Common myeloid progenitor, CD34-positive (primary cell): ENCODE measurements at regions of chr3 and their contacts with region 1.

Region 1: DNA sequence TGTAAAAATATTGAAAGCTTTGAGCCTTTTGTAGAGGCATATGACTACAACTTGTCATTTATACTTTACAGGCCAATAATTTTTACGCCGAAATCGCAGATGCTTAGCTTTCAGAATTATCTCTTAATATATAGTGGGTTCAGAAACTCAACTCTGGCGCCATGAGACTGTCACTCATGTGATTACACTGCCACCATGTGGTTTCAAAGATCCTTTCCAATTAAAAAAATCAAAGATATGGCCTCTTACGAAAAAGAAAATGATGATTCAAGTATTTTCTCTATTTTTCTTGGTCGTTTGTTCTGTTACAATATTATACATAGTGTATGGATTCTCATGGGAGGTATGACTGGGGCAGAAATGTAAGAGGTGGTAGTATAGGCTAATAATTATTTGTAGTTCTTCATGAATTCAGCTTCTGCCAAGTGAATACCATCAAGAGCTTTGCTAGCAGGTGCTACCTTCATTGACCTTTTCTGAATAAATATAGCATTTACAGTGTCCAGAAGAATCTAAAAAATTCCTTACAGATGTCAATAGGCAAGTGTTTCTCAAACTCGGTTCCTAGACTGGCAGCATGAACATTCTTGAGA is 751.7 kb upstream of the GOLIM4 start:
- DNase-seq: peak; percentile 55 to 76 (median 71)
- H3K4me3 ChIP-seq: peak overlapping the region in 4 of 7 experiments; percentile 13 to 70 (median 40)
- H3K27ac ChIP-seq: no peak overlapping the region
- H3K4me1 ChIP-seq: peaks cover 0 to 3% (median 1%) of the 10 kb centered on the region in 4 experiments
- H3K27me3 ChIP-seq: no peaks in the 10 kb centered on the region

Region 2: DNA sequence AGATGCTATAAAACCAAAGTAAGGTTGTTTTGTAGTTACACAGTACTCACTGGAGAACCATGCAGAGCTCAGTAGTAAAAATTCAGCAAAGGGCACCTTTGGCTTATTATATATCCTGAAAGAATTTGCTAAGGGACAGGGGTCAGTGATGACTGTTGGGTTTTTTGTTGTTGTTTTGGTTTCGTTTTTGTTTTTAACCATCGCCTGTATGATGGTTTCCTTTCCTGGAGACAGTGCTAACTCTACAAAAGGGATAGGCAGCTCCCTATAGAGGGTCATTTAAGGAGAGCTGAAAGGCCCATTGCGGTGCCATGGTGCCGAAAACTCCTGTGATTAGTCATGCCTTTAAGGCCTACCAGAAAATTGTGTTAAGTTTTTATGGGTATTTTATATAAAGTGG is 633.5 kb before region 1 on chr3:
- CTCF ChIA-PET with region 1: interaction called, 54 read pairs
- POLR2A ChIA-PET with region 1: no interaction called
- DNase-seq: peak; percentile 25 to 64 (median 56)
- H3K4me3 ChIP-seq: peak overlapping the region in 2 of 7 experiments; percentile 61 to 66
- H3K27ac ChIP-seq: no peak overlapping the region
- H3K4me1 ChIP-seq: peaks cover 0 to 13% (median 0%) of the 10 kb centered on the region in 4 experiments
- H3K27me3 ChIP-seq: no peaks in the 10 kb centered on the region

Region 3: DNA sequence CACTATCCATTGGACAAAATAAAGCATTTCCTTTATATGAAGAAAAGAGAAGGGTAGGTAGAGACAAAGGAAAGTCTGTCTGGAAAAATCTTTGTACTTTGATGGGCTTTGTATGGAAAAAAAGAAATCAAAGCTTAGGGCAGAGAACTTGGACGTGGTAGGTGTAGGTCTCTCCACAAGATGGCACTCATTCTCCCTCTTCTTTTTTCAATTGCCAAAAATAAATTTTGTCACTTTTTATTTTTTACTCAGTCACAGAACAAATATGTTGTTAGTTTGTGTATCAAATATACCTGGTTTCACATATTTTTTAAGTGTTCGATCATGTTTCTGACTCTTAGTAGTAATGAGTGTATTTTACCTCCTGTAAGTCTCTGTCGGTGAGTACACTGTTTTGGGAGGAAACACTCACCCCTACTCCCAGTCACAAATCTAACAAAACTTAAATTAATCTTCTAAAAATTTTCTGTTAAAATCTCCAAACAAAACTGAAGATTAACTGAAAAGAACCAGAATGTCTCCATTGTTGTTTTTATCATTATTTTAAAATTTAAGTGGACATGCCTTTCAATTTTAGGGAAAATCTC is 335.9 kb before region 1 on chr3:
- CTCF ChIA-PET with region 1: interaction called, 14 read pairs
- POLR2A ChIA-PET with region 1: no interaction called
- DNase-seq: peak; percentile 44 to 62 (median 58)
- H3K4me3 ChIP-seq: peak overlapping the region in 1 of 7 experiments; percentile 12
- H3K27ac ChIP-seq: no peak overlapping the region
- H3K4me1 ChIP-seq: peaks cover 0 to 11% (median 2%) of the 10 kb centered on the region in 4 experiments
- H3K27me3 ChIP-seq: no peaks in the 10 kb centered on the region

Region 4: DNA sequence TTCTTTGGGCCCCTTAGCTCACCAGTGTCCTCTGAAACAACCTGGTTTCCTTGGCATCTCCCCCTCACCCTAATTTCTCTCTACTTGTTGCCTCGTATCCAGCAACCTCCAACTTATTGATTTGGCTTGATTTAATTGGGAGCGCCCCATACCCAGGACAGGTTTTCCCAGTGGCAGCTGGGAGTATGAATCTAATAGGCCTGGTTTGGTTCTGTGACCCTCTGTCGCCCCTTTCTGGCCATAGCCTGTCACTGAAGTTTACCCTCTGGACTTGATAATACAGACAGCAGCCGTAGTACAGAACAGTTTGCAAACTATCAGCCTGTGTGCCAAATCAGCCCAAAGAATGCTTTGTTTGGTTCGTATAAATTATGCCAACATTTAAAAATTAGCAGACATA is 226.6 kb before region 1 on chr3:
- CTCF ChIA-PET with region 1: interaction called, 13 read pairs
- POLR2A ChIA-PET with region 1: no interaction called
- DNase-seq: peak; percentile 58 to 66 (median 61)
- H3K4me3 ChIP-seq: no peak overlapping the region
- H3K27ac ChIP-seq: no peak overlapping the region
- H3K4me1 ChIP-seq: peaks cover 11 to 43% (median 22%) of the 10 kb centered on the region in 4 experiments
- H3K27me3 ChIP-seq: no peaks in the 10 kb centered on the region

Region 5: DNA sequence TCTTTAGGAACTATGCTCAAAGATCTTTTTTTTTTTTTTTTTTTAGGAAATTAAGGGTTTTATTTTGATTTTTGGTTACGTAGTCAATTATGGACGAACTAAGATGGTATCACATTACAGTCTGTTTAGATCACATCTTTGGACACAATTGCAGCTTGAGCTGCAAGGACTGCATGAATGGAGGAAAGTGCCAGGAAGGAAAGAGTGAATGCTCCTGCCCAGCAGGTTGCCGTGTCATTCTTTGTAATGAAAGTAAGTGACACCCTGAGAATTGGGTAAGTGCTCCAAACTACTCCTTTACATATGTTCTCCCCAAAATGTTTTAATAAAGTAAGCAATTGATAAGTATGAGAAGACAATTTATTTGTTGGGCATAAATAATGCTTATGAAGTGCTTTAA is 35.2 kb before region 1 on chr3:
- CTCF ChIA-PET with region 1: no interaction called
- POLR2A ChIA-PET with region 1: no interaction called
- DNase-seq: no peak
- H3K4me3 ChIP-seq: no peak overlapping the region
- H3K27ac ChIP-seq: no peak overlapping the region
- H3K4me1 ChIP-seq: no peaks in the 10 kb centered on the region
- H3K27me3 ChIP-seq: no peaks in the 10 kb centered on the region

Region 6: GRCh38 chr3:169071003-169071402 is 223.6 kb after region 1 on chr3:
- CTCF ChIA-PET with region 1: no interaction called
- POLR2A ChIA-PET with region 1: no interaction called
- DNase-seq: no peak
- H3K4me3 ChIP-seq: no peak overlapping the region
- H3K27ac ChIP-seq: no peak overlapping the region
- H3K4me1 ChIP-seq: no peaks in the 10 kb centered on the region
- H3K27me3 ChIP-seq: no peaks in the 10 kb centered on the region